Adrenal gland (tissue), 19 donors: ENCODE measurements at regions of chr1 and their contacts with region 1.

Region 1: DNA sequence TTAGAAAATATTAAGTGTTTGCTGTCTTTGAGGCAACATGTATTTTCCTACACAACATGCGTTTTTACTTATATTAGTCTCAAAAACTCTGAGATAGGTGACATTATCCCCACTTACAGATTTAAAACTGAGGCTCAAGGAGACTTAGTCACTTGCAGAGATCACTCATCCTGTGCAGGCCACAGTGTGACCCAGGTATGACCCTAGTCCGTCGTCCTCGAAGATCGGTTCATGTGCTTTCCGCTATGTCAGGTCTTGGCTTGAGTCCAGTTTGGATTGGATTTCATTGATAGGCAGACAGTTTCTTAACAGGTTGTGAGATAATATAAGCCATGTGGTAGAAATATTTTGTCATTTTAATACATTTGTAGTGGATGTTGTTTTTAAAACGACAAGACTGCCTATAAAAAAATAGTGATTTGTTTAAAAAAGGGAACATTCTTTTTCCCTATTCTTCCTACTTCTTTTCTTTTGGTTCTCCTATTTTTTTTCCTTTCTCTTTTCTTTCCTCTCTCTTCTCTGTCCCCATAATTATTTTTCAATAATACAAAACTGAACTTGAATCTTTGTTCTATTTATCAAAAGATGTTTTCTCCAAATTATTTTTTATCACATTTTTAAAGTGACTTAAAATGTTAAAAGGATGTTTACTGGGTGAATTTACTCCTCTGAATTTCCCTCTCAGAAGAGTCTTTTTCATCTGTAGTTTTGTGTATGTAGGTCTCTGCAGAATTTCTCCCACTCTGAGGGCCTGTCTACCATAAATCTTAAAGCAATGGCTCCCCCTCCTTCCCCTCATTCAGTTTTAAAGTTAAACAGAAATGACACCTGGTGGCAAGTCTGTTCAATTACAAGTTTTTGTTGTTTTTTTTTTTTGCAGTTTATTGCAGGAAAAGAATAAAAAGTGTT is 81.8 kb downstream of the PHTF1 start:
- DNase-seq: peak; percentile 52 to 89 (median 78)
- H3K4me3 ChIP-seq: no peak overlapping the region
- H3K27ac ChIP-seq: peak overlapping the region in 1 of 5 donors; percentile 5
- H3K4me1 ChIP-seq: peaks cover 6 to 13% of the 10 kb centered on the region in 2 donors
- H3K27me3 ChIP-seq: no peaks in the 10 kb centered on the region
- CTCF ChIP-seq: peak; percentile 48 to 83 (median 62)
- POLR2A ChIP-seq: no peak

Region 2: GRCh38 chr1:113140588-113141446 is 536.7 kb before region 1 on chr1:
- intact Hi-C with region 1: loop called (anchors 5 to 10 kb)
- DNase-seq: peak; percentile 58 to 87 (median 63)
- H3K4me3 ChIP-seq: peak overlapping the region in 1 of 4 donors; percentile 5
- H3K27ac ChIP-seq: no peak overlapping the region
- H3K4me1 ChIP-seq: peaks cover 6 to 25% of the 10 kb centered on the region in 2 donors
- H3K27me3 ChIP-seq: no peaks in the 10 kb centered on the region
- CTCF ChIP-seq: peak; percentile 55 to 92 (median 86)
- POLR2A ChIP-seq: no peak

Region 3: DNA sequence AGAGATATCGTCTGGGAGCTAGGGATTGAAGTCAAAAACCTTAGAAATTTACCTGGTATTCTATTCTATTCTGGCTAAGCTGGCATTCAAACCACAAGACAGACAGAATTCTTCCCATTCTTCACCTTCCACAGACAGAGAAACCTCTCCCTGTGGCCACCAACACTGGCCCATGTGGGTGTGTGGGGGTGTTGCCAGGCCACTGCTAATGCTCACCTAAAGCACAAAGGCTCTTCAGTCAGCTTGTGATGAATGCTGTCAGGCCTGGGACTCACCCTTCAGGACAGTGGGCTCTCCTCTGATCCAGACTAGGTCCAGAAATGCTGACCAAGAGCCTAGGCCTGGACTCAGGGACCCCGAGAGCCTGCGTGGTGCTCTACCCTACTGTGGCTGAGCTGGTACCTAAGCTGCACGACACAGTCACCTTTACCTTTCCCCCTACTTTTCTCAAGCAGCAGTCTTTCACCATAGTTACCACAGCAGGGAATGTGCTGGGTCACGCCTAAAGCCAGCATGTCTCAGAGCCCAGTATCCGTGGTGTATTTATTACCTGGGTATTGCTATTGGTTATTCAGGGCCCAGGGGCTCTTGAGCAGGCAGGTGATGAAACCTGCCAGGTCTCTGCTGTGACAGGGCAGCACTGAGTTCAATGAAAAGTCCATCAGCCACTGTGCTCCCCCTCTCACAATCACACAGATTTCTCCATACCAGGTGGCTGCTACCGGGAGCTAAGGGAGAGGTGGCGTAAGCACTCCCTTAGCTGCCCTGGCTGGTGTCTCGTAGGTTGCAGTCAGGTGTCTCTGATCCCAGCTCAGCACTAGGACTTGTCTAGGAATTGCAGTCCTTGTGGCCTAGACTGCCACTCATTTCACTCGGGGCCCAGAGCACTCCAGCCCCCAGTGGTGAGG is 47.2 kb before region 1 on chr1:
- intact Hi-C with region 1: no loop called
- DNase-seq: no peak
- H3K4me3 ChIP-seq: no peak overlapping the region
- H3K27ac ChIP-seq: no peak overlapping the region
- H3K4me1 ChIP-seq: no peaks in the 10 kb centered on the region
- H3K27me3 ChIP-seq: no peaks in the 10 kb centered on the region
- CTCF ChIP-seq: no peak
- POLR2A ChIP-seq: no peak

Region 4: GRCh38 chr1:113849060-113849459 is 171.6 kb after region 1 on chr1:
- intact Hi-C with region 1: no loop called
- DNase-seq: no peak
- H3K4me3 ChIP-seq: no peak overlapping the region
- H3K27ac ChIP-seq: no peak overlapping the region
- H3K4me1 ChIP-seq: no peaks in the 10 kb centered on the region
- H3K27me3 ChIP-seq: no peaks in the 10 kb centered on the region
- CTCF ChIP-seq: no peak
- POLR2A ChIP-seq: no peak